Activated CD8-positive, alpha-beta T cell treated with anti-CD3 and anti-CD28 coated beads, Interleukin-2, amount 10 ng/mL, durations not matched to agents 7 days and 5 days (primary cell): ENCODE measurements at regions of chr16 and their contacts with region 1.

Region 1: GRCh38 chr16:10737068-10737625 is 6.5 kb upstream of the NUBP1 start:
- DNase-seq: peak; percentile 82
- ATAC-seq: peak; percentile 49
- H3K4me3 Mint-ChIP-seq: peak overlapping the region; percentile 48
- H3K27ac Mint-ChIP-seq: peak overlapping the region; percentile 63
- H3K4me1 Mint-ChIP-seq: peaks cover 42% of the 10 kb centered on the region
- H3K27me3 Mint-ChIP-seq: no peaks in the 10 kb centered on the region

Region 2: GRCh38 chr16:10256784-10257641 is 480.1 kb before region 1 on chr16:
- CTCF ChIA-PET with region 1: interaction called, 16 read pairs
- POLR2A ChIA-PET with region 1: no interaction called
- DNase-seq: peak; percentile 59
- ATAC-seq: peak; percentile 63
- H3K4me3 Mint-ChIP-seq: no peak overlapping the region
- H3K27ac Mint-ChIP-seq: no peak overlapping the region
- H3K4me1 Mint-ChIP-seq: peaks cover 8% of the 10 kb centered on the region
- H3K27me3 Mint-ChIP-seq: peaks cover 7% of the 10 kb centered on the region

Region 3: DNA sequence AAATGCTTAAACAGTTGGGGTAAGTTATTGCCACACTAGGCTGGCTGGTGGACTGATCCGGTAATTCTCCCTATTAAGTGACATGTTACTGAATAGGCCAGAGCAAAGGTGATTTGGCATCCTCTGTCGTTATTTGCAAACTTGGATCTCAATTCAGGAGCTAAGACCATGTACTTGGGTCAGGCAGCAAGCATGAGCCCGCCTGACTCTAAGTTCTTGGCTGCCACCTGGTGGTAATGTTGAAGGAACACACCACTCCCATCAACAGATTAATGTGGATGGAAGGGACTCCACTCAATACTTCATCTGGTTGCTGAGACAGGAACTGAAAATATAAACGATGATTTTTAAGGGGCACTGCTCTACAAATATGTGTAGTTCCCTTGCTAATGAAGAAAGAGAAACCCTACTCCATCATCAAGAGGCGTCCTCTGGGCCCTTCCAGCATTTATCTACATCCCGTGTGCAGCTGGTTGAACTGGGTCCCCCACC is 227.6 kb before region 1 on chr16:
- CTCF ChIA-PET with region 1: interaction called, 112 read pairs
- POLR2A ChIA-PET with region 1: no interaction called
- DNase-seq: peak; percentile 78
- ATAC-seq: peak; percentile 92
- H3K4me3 Mint-ChIP-seq: no peak overlapping the region
- H3K27ac Mint-ChIP-seq: no peak overlapping the region
- H3K4me1 Mint-ChIP-seq: no peaks in the 10 kb centered on the region
- H3K27me3 Mint-ChIP-seq: peaks cover 8% of the 10 kb centered on the region

Region 4: DNA sequence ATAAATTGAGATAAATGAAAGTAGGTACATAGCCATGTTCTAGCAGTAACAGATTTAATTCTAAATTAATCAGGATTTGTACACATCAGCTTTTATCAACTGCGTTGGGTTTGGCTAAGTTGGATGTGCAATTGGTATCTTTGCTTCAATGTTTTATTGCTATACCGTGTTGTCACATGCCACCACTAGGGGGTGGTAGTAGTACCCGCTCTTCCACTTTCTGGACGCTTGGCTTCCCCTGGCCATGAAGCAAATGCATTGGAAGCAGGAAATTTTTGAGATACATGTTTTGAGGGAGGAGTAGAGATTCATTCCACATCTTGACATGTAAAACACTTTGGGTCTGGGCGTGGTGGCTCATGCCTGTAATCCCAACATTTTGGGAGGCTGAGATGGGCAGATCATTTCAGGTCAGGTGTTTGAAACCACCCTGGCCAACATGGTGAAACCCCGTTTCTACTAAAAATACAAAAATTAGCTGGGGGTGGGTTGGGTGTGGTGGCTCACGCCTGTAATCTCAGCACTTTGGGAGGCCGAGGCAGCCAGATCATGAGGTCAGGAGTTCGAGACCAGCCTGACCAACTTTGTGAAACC is 215.4 kb before region 1 on chr16:
- CTCF ChIA-PET with region 1: interaction called, 112 read pairs
- POLR2A ChIA-PET with region 1: no interaction called
- DNase-seq: peak; percentile 61
- ATAC-seq: peak; percentile 69
- H3K4me3 Mint-ChIP-seq: no peak overlapping the region
- H3K27ac Mint-ChIP-seq: no peak overlapping the region
- H3K4me1 Mint-ChIP-seq: no peaks in the 10 kb centered on the region
- H3K27me3 Mint-ChIP-seq: no peaks in the 10 kb centered on the region

Region 5: DNA sequence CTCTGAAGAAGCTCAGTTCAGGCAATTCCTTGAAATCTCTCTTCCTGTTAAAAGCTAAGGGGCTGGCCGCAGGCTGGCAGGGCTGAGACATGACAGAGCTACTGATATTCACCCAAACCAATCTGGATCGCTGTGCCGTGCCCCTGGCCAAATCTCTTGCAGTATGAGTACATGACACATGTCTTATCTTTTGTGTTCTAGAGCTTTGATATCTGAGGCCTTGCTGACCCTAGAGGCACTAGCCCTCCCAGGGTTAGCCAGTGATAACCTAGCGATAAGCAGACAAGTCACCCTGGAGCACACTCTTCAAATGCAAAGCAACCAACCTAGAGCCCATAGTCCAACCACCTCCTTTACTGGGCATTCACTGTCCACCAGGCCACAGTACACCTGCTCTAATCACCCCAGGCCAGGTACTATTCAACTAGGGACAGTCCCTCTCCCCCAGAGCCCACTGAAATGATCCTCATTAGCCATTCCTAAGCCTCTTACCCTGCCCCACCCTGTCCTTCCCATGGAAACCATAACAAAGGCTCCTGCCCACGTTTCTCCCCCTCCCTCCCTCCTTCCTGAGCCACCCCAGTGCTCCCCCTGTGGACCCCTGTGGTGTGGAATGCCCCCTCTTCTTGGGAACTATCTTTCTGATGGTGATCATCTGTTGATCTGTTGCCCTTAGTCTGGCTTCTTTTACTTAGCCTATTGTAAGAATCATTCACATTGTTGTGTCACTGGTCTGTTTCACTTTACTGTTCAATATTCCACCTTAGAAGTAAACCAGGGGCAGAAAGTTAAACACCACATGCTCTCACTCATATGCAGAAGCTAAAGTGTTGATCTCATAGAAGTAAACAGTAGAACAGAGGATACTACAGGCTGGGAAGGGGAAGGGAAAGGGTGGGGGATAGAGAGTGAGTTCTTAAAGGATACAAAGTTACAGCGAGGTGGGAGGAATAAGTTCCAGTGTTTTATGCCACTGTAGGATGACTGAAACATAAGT is 94.9 kb before region 1 on chr16:
- CTCF ChIA-PET with region 1: no interaction called
- POLR2A ChIA-PET with region 1: no interaction called
- DNase-seq: no peak
- ATAC-seq: no peak
- H3K4me3 Mint-ChIP-seq: no peak overlapping the region
- H3K27ac Mint-ChIP-seq: no peak overlapping the region
- H3K4me1 Mint-ChIP-seq: no peaks in the 10 kb centered on the region
- H3K27me3 Mint-ChIP-seq: no peaks in the 10 kb centered on the region

Region 6: DNA sequence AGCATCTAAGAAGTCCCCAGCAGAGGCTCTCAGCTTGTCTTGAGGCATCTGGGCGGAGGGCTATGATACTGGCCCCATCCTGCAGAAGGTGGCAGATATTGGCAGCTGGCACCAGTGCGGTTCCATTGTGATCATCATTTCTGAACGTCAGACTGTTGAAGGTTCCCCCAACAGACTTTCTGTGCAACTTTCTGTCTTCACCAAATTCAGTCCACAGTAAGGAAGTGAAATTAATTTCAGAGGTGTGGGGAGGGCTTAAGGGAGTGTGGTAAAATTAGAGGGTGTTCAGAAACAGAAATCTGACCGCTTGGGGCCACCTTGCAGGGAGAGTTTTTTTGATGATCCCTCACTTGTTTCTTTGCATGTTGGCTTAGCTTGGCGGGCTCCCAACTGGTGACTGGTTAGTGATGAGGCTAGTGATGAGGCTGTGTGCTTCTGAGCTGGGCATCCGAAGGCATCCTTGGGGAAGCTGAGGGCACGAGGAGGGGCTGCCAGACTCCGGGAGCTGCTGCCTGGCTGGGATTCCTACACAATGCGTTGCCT is 139.7 kb after region 1 on chr16 and contains the start of gene CIITA:
- CTCF ChIA-PET with region 1: interaction called, 14 read pairs
- POLR2A ChIA-PET with region 1: no interaction called
- DNase-seq: peak; percentile 84
- ATAC-seq: peak; percentile 59
- H3K4me3 Mint-ChIP-seq: peak within 1 kb of the TSS; percentile 96
- H3K27ac Mint-ChIP-seq: peak within 1 kb of the TSS; percentile 76
- H3K4me1 Mint-ChIP-seq: peaks cover 91% of the 10 kb centered on the region
- H3K27me3 Mint-ChIP-seq: peaks cover 17% of the 10 kb centered on the region
- total RNA-seq, gene CIITA: 23.3 to 23.6 TPM